Esophagus muscularis mucosa (tissue), 4 donors: ENCODE measurements at regions of chr2 and their contacts with region 1.

Region 1: GRCh38 chr2:204177977-204178540 is 241.5 kb downstream of the ICOS start:
- DNase-seq: no peak
- H3K4me3 ChIP-seq: no peak overlapping the region
- H3K27ac ChIP-seq: no peak overlapping the region
- H3K4me1 ChIP-seq: no peaks in the 10 kb centered on the region
- H3K27me3 ChIP-seq: no peaks in the 10 kb centered on the region
- CTCF ChIP-seq: peak; percentile 53 to 67 (median 55)
- EP300 ChIP-seq: no peak
- POLR2A ChIP-seq: no peak

Region 2: DNA sequence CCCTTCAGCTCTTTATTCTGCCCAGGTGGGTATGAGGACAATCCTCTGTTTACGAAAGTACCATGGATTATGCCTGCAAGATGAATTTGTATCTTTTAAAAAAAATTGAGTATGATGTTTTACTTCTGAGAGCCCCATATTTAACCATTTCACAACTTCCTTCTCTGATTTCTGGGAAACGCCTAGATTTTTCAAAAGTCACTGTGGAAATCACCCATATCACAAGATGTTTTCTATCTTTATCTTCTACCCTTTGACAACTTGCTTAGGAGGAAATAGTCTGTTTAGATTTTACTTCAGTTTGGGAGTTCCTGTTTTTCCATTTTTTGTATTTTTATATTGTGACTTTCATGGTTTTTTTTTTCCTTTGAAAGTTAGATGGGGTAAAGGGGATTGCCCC is 188.5 kb before region 1 on chr2:
- intact Hi-C with region 1: no loop called
- DNase-seq: no peak
- H3K4me3 ChIP-seq: no peak overlapping the region
- H3K27ac ChIP-seq: no peak overlapping the region
- H3K4me1 ChIP-seq: no peaks in the 10 kb centered on the region
- H3K27me3 ChIP-seq: no peaks in the 10 kb centered on the region
- CTCF ChIP-seq: no peak
- EP300 ChIP-seq: no peak
- POLR2A ChIP-seq: no peak

Region 3: DNA sequence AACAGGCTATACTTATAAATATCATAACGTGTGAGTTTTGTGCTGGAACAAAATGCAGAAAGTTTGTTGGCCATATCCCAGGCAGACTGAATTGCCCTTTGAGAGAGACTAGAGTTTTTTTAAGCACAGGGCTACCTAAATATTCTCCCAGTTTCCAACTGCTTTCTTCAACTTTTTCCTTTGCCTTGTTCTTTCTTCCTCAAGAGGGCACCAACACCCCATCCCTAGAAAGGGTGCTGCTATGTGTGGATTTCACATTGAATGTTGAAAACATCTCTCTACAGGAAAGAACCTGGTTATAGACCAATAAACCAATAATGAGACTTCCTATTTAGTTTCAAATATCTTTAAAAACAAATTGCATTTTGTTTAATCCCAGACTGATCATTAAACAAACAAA is 153.6 kb before region 1 on chr2:
- intact Hi-C with region 1: loop called (anchors 10 kb)
- DNase-seq: peak; percentile 88
- H3K4me3 ChIP-seq: no peak overlapping the region
- H3K27ac ChIP-seq: peak overlapping the region in 1 of 4 donors; percentile 5
- H3K4me1 ChIP-seq: peaks cover 2 to 20% (median 16%) of the 10 kb centered on the region in 4 donors
- H3K27me3 ChIP-seq: no peaks in the 10 kb centered on the region
- CTCF ChIP-seq: peak; percentile 51 to 67 (median 55)
- EP300 ChIP-seq: no peak
- POLR2A ChIP-seq: no peak

Region 4: DNA sequence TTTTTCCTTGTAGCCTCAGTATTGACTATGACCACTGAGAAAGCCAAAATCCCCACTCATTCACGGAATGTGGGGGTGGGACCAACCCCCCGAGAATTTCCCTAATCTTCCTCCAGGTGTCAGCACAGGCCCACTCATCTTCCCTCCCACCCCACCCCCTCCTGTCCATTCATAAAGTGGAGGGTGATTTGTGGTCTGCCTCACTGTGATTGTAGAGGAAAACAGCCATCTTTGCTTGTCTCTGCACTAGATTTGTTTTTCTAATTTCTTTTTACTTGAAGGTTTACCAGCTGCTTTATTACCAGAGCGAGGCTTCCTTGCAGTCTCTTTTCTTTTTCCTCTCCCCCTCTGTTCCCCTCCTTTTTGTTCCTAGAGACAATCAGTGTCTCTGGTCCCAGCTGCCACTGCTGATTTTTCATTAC is 69.7 kb before region 1 on chr2:
- intact Hi-C with region 1: loop called (anchors 5 kb)
- DNase-seq: no peak
- H3K4me3 ChIP-seq: no peak overlapping the region
- H3K27ac ChIP-seq: no peak overlapping the region
- H3K4me1 ChIP-seq: peaks cover 15 to 53% (median 45%) of the 10 kb centered on the region in 4 donors
- H3K27me3 ChIP-seq: no peaks in the 10 kb centered on the region
- CTCF ChIP-seq: peak; percentile 60 to 71 (median 70)
- EP300 ChIP-seq: no peak
- POLR2A ChIP-seq: no peak